Panc1 (cell line): ENCODE measurements at regions of chrX and their contacts with region 1.

Region 1: GRCh38 chrX:115330498-115331168 is 41.1 kb downstream of the LUZP4 start:
- DNase-seq: peak; percentile 42
- ATAC-seq: peak; percentile 85
- H3K4me3 ChIP-seq: no peak overlapping the region; a peak in 1 of 4 replicates
- H3K27ac ChIP-seq: no peak overlapping the region
- H3K4me1 ChIP-seq: no peaks in the 10 kb centered on the region
- H3K27me3 ChIP-seq: no peaks in the 10 kb centered on the region
- CTCF ChIP-seq: peak; percentile 78

Region 2: DNA sequence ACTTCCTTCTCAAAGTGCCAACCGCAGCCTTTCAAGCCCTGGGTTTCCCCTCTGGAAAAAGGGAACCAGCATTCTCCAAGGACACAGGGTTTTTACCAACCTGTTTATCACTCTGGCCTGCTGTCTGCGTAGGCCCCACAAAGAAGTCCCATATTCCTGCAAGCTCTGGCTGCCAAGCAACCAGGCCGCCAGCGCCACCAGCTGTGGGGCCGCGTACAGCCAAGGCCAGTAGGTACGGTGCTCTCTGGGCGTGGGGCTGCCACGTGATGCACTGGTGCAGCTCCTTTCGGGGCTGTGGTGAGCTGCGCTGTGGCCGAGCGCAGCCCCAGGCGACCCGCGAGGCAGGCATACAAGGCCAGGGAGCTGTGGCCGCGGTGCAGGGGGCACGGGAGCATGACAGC is 19.0 kb before region 1 on chrX:
- CTCF ChIA-PET with region 1: interaction called, 20 read pairs
- POLR2A ChIA-PET with region 1: no interaction called
- in situ Hi-C with region 1: no loop called
- intact Hi-C with region 1: no loop called
- DNase-seq: no peak
- ATAC-seq: no peak
- H3K4me3 ChIP-seq: no peak overlapping the region
- H3K27ac ChIP-seq: no peak overlapping the region
- H3K4me1 ChIP-seq: no peaks in the 10 kb centered on the region
- H3K27me3 ChIP-seq: no peaks in the 10 kb centered on the region
- CTCF ChIP-seq: no peak

Region 3: DNA sequence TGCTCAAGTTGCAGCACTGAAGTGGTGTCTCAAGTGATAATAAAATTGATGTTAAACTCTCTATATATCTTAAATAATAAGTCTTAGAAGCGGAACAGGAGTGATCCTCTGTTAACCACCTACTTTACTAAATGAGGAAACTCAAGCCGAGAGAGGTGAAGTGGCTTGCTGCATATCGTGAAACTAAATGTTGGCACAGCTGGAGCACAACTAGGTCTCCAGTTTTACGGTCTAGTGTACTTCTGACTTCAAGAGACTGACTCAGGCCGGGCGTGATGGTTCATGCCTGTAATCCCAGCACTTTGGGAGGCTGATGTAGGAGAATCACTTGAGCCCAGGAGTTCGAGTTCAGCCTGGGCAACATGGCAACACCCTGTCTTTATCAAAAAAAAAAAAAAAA is 194.9 kb after region 1 on chrX:
- CTCF ChIA-PET with region 1: no interaction called
- POLR2A ChIA-PET with region 1: no interaction called
- in situ Hi-C with region 1: no loop called
- intact Hi-C with region 1: no loop called
- DNase-seq: no peak
- ATAC-seq: no peak
- H3K4me3 ChIP-seq: no peak overlapping the region
- H3K27ac ChIP-seq: no peak overlapping the region
- H3K4me1 ChIP-seq: no peaks in the 10 kb centered on the region
- H3K27me3 ChIP-seq: no peaks in the 10 kb centered on the region
- CTCF ChIP-seq: no peak

Region 4: GRCh38 chrX:115560978-115561604 is 230.5 kb after region 1 on chrX and contains the start of gene PLS3:
- CTCF ChIA-PET with region 1: no interaction called
- POLR2A ChIA-PET with region 1: no interaction called
- in situ Hi-C with region 1: no loop called
- intact Hi-C with region 1: loop called (anchors 5 kb)
- DNase-seq: no peak
- ATAC-seq: peak; percentile 94
- H3K4me3 ChIP-seq: peak within 1 kb of the TSS; percentile 76 to 80
- H3K27ac ChIP-seq: peak within 1 kb of the TSS; percentile 92
- H3K4me1 ChIP-seq: peaks cover 43% of the 10 kb centered on the region
- H3K27me3 ChIP-seq: no peaks in the 10 kb centered on the region
- CTCF ChIP-seq: no peak
- total RNA-seq, gene PLS3: 164 TPM

Region 5: DNA sequence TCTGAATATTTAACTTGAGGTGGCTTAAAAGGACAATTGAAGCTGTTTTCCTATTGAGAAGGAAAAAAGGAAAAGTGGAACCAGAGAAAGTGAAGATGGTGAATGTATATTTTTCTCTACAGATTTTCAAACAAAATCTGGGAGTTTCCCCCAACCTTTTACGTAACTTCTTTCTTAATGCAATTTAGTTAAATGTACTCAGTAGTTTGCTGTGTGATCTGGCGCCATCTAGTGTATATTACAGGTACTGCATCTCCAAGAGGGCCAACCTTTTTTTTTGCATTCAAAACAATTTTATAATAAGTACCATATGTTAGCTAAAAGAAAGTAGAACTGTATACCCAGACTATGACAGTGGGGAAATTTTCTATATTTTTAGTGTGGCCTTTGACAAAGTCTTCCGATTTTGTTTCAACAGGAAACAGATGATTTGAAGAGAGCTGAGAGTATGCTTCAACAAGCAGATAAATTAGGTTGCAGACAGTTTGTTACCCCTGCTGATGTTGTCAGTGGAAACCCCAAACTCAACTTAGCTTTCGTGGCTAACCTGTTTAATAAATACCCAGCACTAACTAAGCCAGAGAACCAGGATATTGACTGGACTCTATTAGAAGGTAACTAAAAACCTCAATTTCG is 312.4 kb after region 1 on chrX:
- CTCF ChIA-PET with region 1: interaction called, 3 read pairs
- POLR2A ChIA-PET with region 1: no interaction called
- in situ Hi-C with region 1: no loop called
- intact Hi-C with region 1: loop called (anchors 1 kb)
- DNase-seq: no peak
- ATAC-seq: no peak
- H3K4me3 ChIP-seq: no peak overlapping the region
- H3K27ac ChIP-seq: no peak overlapping the region
- H3K4me1 ChIP-seq: no peaks in the 10 kb centered on the region
- H3K27me3 ChIP-seq: no peaks in the 10 kb centered on the region
- CTCF ChIP-seq: peak; percentile 82; the same call in 1 of the 2 replicates

Region 6: GRCh38 chrX:115690511-115691216 is 360.0 kb after region 1 on chrX:
- CTCF ChIA-PET with region 1: interaction called, 3 read pairs
- POLR2A ChIA-PET with region 1: no interaction called
- in situ Hi-C with region 1: no loop called
- intact Hi-C with region 1: loop called (anchors 5 kb)
- DNase-seq: peak; percentile 63
- ATAC-seq: peak; percentile 91
- H3K4me3 ChIP-seq: no peak overlapping the region
- H3K27ac ChIP-seq: no peak overlapping the region
- H3K4me1 ChIP-seq: no peaks in the 10 kb centered on the region
- H3K27me3 ChIP-seq: no peaks in the 10 kb centered on the region
- CTCF ChIP-seq: peak; percentile 88